Ascending aorta (tissue), 2 donors: ENCODE measurements at regions of chrX and their contacts with region 1.

Region 1: DNA sequence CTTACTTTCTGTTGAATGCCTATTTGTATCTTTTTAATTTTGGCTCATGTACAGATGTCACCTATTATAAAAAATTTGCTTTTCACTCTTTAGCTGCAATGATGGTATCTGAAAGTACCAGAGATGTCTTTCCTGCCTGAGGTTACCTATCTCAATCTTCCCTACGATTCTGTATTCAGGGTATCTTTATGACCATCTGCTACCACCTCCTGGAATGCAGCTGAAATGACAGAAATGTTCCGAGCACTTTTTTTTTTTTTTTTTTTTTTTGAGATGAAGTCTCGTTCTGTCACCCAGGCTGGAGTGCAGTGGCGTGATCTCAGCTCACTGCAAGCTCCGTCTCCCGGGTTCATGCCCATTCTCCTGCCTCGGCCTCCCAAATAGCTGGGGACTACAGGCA is 136.4 kb downstream of the REPS2 start:
- DNase-seq: no peak
- H3K4me3 ChIP-seq: no peak overlapping the region
- H3K27ac ChIP-seq: no peak overlapping the region
- H3K4me1 ChIP-seq: peaks cover 0 to 12% of the 10 kb centered on the region in 2 donors
- H3K27me3 ChIP-seq: no peaks in the 10 kb centered on the region
- CTCF ChIP-seq: peak in 1 of 3 experiments; percentile 13

Region 2: GRCh38 chrX:16394290-16394689 is 688.5 kb before region 1 on chrX:
- intact Hi-C with region 1: no loop called
- DNase-seq: no peak
- H3K4me3 ChIP-seq: no peak overlapping the region
- H3K27ac ChIP-seq: no peak overlapping the region
- H3K4me1 ChIP-seq: no peaks in the 10 kb centered on the region
- H3K27me3 ChIP-seq: no peaks in the 10 kb centered on the region
- CTCF ChIP-seq: no peak

Region 3: DNA sequence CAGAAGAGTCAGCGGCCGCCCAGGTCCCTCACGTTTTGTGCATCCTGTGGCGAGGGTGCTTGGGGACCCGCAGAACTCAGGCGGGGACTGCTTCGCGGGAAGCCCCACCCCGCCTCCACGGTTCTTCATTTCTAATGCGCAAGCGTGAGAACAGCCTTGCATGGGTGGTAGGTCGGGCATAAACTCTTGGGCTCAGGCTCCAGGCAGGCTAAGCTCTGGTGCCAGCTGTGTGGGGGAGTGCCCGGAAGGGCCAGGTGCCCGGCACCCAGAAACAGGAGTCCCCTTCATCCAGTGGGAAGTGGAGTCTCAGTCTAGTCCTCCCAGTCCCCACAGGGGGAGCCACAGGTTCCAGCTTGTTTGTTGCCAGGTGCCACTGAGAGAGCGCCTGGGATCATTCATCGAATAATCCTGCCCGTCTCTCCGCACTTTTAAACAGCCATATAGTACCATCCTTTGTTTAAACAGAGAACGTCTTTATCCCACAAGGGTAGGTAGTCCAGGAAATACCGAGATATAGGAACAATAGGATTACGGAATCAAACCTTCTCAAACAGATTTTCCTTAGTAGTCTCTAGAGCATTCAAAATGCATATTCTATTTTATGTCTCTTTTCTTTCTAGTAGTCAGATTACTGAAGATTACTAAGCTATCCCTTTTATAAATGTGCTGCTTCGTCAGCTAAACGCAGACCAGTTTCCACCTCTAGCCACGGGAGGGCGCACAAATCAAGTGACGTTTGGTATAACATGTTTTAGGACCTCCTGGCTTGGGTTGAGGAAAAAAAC is 199.9 kb before region 1 on chrX:
- intact Hi-C with region 1: loop called (anchors 5 kb)
- DNase-seq: peak; percentile 20 to 84
- H3K4me3 ChIP-seq: peak overlapping the region; percentile 37 to 57
- H3K27ac ChIP-seq: peak overlapping the region in 1 of 2 donors; percentile 53
- H3K4me1 ChIP-seq: no peaks in the 10 kb centered on the region
- H3K27me3 ChIP-seq: no peaks in the 10 kb centered on the region
- CTCF ChIP-seq: peak; percentile 27 to 59 (median 49)

Region 4: GRCh38 chrX:17007206-17007683 is 75.6 kb before region 1 on chrX:
- intact Hi-C with region 1: no loop called
- DNase-seq: no peak
- H3K4me3 ChIP-seq: no peak overlapping the region
- H3K27ac ChIP-seq: no peak overlapping the region
- H3K4me1 ChIP-seq: no peaks in the 10 kb centered on the region
- H3K27me3 ChIP-seq: no peaks in the 10 kb centered on the region
- CTCF ChIP-seq: peak in 2 of 3 experiments; percentile 19 to 37

Region 5: GRCh38 chrX:17032351-17032750 is 50.5 kb before region 1 on chrX:
- intact Hi-C with region 1: loop called (anchors 5 kb)
- DNase-seq: peak; percentile 13 to 88
- H3K4me3 ChIP-seq: no peak overlapping the region
- H3K27ac ChIP-seq: peak overlapping the region; percentile 83 to 85
- H3K4me1 ChIP-seq: peaks cover 0 to 9% of the 10 kb centered on the region in 2 donors
- H3K27me3 ChIP-seq: no peaks in the 10 kb centered on the region
- CTCF ChIP-seq: no peak

Region 6: DNA sequence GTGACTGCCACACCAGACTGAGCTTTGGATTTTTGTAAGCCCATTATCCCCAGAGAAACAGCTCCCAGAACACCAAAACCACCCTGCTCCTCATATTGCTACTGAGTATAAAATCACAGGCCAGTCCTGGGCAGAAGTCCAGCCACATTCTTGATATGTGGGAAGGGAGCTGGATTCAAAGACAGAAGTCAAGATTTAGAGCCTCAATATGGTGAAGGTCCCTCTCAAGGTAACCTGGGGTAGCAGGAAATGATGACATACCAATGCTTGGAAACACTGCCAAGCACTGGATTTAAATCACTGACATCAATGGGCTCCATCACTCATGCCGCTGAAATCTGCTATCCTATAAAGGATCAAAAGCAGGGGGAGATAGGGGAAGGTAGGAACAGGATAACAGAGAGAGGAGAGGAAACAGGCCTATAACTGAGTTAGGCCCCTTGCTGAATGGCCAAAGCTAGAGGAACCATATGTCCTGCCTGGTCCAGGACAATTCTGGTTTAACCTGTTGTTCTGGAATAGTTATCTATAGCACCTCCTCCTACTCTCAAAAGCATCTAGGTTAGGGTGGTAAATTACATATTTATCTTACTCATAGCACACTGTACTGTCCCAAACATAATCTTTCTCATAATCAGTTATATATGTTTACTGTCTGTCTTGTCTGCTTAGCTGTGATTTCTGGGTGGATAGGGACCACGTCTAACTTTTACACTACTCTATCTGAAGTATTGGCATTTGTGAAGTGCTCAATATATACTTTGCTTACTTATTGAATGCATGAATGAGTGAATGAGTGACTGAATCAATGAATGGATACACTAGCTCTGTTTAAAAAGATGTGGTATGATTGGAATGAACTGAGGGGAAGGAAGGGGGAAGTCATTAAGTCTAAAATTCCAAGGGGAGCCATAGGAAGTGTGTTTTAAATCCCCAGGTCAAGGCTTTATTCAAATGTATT is 208.6 kb after region 1 on chrX:
- intact Hi-C with region 1: no loop called
- DNase-seq: no peak
- H3K4me3 ChIP-seq: no peak overlapping the region
- H3K27ac ChIP-seq: peak overlapping the region; percentile 63 to 75
- H3K4me1 ChIP-seq: no peaks in the 10 kb centered on the region
- H3K27me3 ChIP-seq: no peaks in the 10 kb centered on the region
- CTCF ChIP-seq: no peak